MCF 10A (cell line): ENCODE measurements at regions of chr14 and their contacts with region 1.

Region 1: DNA sequence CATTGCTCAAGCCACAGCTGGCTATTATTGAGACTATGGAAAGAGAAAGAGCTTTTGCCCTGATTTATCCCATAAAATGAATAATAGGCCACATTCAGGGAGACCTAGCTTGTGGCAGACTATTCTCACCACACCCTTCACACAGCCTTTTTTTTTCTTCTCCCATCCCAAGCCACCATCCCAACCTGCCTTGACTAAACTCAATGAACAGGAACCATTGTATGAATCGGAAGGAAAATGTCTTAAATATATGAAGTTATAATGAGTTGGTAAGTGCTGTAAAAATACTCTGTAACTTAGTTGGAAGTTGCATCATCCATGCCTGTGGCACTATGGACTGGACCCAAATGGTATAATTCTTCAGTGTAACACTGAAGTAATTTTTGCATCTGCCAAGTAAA is 338.4 kb downstream of the RAD51B start:
- DNase-seq: peak; percentile 60
- H3K4me3 Mint-ChIP-seq: peak overlapping the region; percentile 30
- H3K27ac Mint-ChIP-seq: peak overlapping the region; percentile 96
- H3K4me1 Mint-ChIP-seq: peaks cover 18% of the 10 kb centered on the region
- H3K27me3 Mint-ChIP-seq: no peaks in the 10 kb centered on the region
- CTCF ChIP-seq: no peak

Region 2: DNA sequence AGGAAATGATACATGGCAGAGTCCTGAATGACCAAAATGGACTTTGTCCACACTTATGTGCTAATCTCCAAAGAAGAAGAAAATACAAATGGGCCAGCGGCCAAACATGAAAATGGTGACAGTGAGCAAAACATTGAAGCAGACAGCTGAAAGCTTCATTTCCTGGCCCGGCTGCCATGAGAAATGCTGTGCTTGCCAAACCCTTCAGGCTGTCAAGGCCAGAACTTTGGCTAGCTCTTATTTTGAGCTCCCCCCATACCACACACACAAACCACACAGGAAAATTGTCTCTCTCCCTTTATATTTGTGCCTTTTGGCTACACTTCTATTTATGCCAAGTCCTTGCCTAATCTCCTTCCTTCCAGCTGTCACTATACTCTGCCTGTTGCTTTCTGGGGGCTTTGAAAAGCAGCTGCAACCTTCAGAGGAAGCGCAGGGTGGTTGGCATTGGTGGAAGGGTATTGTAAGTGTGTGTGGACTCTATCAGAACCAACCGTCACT is 14.6 kb before region 1 on chr14:
- CTCF ChIA-PET with region 1: interaction called, 5 read pairs
- POLR2A ChIA-PET with region 1: interaction called, 18 read pairs
- intact Hi-C with region 1: no loop called
- DNase-seq: peak; percentile 82
- H3K4me3 Mint-ChIP-seq: no peak overlapping the region
- H3K27ac Mint-ChIP-seq: peak overlapping the region; percentile 95
- H3K4me1 Mint-ChIP-seq: peaks cover 77% of the 10 kb centered on the region
- H3K27me3 Mint-ChIP-seq: no peaks in the 10 kb centered on the region
- CTCF ChIP-seq: no peak